Naive thymus-derived CD4-positive, alpha-beta T cell (primary cell): ENCODE measurements at regions of chr10 and their contacts with region 1.

Region 1: DNA sequence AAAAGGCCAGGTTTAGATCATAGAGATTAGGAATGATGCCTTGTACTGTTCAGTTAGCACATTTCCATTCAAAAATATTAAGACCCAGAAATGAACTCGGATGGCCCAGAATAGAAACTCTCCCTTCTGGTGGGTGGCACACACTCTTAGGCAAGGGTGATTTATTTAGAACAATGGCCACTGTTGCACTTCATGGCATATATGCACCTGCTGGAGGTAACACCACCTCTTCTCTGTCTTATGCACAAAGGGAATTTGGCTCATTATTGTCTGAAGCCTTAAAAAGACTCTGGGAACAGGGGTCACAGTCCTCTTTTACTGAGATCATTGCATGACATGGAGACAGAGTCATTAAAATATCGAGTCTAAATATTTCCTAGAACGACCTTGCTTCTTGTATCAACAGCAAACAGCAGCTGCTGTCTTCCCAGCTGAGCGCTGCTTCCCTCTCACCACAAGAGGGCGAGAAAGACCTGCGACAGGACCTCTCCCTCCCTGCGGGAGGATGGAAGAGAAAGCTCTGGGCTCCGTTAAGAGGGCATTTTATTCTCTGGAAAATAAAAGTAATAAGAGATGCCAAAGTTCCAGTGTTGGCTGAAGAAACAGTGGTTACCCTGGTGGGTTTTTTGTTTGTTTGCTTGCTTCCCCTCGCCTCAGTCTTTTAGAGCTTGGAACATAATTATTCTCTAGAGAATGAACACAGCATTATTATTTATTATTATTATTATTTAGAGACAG is 13.6 kb upstream of the BAMBI start:
- DNase-seq: peak; percentile 33 to 67 (median 58)
- ATAC-seq: peak; percentile 89
- H3K4me3 ChIP-seq: no peak overlapping the region
- H3K4me3 Mint-ChIP-seq: no peak overlapping the region
- H3K27ac ChIP-seq: no peak overlapping the region
- H3K27ac Mint-ChIP-seq: no peak overlapping the region
- H3K4me1 ChIP-seq: peaks cover 0 to 4% of the 10 kb centered on the region in 2 donors
- H3K4me1 Mint-ChIP-seq: peaks cover 5 to 11% (median 7%) of the 10 kb centered on the region in 7 donors
- H3K27me3 ChIP-seq: peaks cover 0 to 8% of the 10 kb centered on the region in 2 donors
- H3K27me3 Mint-ChIP-seq: peaks cover 45 to 50% (median 49%) of the 10 kb centered on the region in 5 donors

Region 2: GRCh38 chr10:28432210-28432676 is 231.5 kb before region 1 on chr10:
- CTCF ChIA-PET with region 1: no interaction called
- POLR2A ChIA-PET with region 1: no interaction called
- intact Hi-C with region 1: loop called in 1 of 2 experiments (anchors 5 kb)
- DNase-seq: peak in 7 of 9 donors; percentile 11 to 45 (median 35)
- ATAC-seq: peak; percentile 83
- H3K4me3 ChIP-seq: no peak overlapping the region
- H3K4me3 Mint-ChIP-seq: peak overlapping the region in 9 of 10 donors; percentile 17 to 80 (median 57)
- H3K27ac ChIP-seq: no peak overlapping the region
- H3K27ac Mint-ChIP-seq: no peak overlapping the region
- H3K4me1 ChIP-seq: no peaks in the 10 kb centered on the region
- H3K4me1 Mint-ChIP-seq: peaks cover 4 to 9% (median 7%) of the 10 kb centered on the region in 7 donors
- H3K27me3 ChIP-seq: no peaks in the 10 kb centered on the region
- H3K27me3 Mint-ChIP-seq: peaks cover 0 to 7% (median 0%) of the 10 kb centered on the region in 5 donors

Region 3: GRCh38 chr10:28991326-28992270 is 327.9 kb after region 1 on chr10:
- CTCF ChIA-PET with region 1: no interaction called
- POLR2A ChIA-PET with region 1: no interaction called
- intact Hi-C with region 1: loop called in 1 of 2 experiments (anchors 1 kb)
- DNase-seq: peak in 5 of 9 donors; percentile 0 to 25 (median 11)
- ATAC-seq: peak; percentile 40
- H3K4me3 ChIP-seq: no peak overlapping the region
- H3K4me3 Mint-ChIP-seq: no peak overlapping the region
- H3K27ac ChIP-seq: no peak overlapping the region
- H3K27ac Mint-ChIP-seq: no peak overlapping the region
- H3K4me1 ChIP-seq: no peaks in the 10 kb centered on the region
- H3K4me1 Mint-ChIP-seq: no peaks in the 10 kb centered on the region
- H3K27me3 ChIP-seq: no peaks in the 10 kb centered on the region
- H3K27me3 Mint-ChIP-seq: peaks cover 0 to 20% (median 9%) of the 10 kb centered on the region in 5 donors

Region 4: GRCh38 chr10:29392376-29393021 is 728.8 kb after region 1 on chr10:
- CTCF ChIA-PET with region 1: no interaction called
- POLR2A ChIA-PET with region 1: no interaction called
- intact Hi-C with region 1: loop called in 1 of 2 experiments (anchors 1 kb)
- DNase-seq: peak in 4 of 9 donors; percentile 8 to 24 (median 22)
- ATAC-seq: peak; percentile 61
- H3K4me3 ChIP-seq: no peak overlapping the region
- H3K4me3 Mint-ChIP-seq: no peak overlapping the region
- H3K27ac ChIP-seq: no peak overlapping the region
- H3K27ac Mint-ChIP-seq: no peak overlapping the region
- H3K4me1 ChIP-seq: no peaks in the 10 kb centered on the region
- H3K4me1 Mint-ChIP-seq: peaks cover 0 to 3% (median 0%) of the 10 kb centered on the region in 7 donors
- H3K27me3 ChIP-seq: no peaks in the 10 kb centered on the region
- H3K27me3 Mint-ChIP-seq: peaks cover 0 to 24% (median 9%) of the 10 kb centered on the region in 5 donors

Region 5: DNA sequence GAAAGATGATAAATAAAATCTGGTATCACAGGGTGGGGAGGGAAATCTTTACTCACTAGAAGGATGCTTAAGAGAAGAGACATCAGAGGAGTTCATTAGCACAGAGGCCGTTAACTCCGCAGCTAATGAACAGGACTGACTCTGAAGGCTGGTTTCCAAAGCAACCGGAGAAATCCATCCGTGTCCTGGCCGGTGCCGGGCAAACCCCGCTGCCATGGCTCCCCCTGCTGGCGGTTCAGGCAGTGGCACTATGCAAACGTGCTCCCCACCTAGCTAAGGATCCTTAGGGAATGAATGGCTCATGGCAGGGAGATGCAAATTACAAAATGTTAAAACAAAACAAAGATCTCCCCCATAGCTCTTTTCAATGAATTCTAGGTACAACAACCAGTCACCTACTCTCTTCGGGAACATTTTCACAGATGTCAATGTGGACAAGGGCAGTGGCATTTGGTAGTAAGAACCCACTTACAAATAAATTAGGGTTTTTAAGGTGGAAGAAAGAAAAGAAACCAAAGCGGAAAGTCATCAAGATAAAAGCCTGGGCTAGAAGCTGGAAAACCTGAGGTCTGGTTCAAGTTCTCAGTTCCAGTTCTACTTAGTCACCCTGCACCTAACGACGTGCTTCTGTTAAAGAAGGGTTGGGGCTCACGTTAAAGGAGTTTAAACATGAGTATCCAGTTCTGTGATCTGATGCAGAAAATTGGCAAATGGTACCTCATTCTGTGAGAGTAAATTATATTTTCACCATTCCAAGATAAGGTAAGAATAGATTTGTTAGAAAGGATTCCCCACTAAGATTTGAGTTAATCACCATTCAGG is 832.8 kb after region 1 on chr10:
- CTCF ChIA-PET with region 1: no interaction called
- POLR2A ChIA-PET with region 1: no interaction called
- intact Hi-C with region 1: loop called in 1 of 2 experiments (anchors 1 kb)
- DNase-seq: peak in 8 of 9 donors; percentile 12 to 77 (median 32)
- ATAC-seq: peak; percentile 83
- H3K4me3 ChIP-seq: no peak overlapping the region
- H3K4me3 Mint-ChIP-seq: no peak overlapping the region
- H3K27ac ChIP-seq: no peak overlapping the region
- H3K27ac Mint-ChIP-seq: no peak overlapping the region
- H3K4me1 ChIP-seq: no peaks in the 10 kb centered on the region
- H3K4me1 Mint-ChIP-seq: peaks cover 0 to 5% (median 0%) of the 10 kb centered on the region in 7 donors
- H3K27me3 ChIP-seq: no peaks in the 10 kb centered on the region
- H3K27me3 Mint-ChIP-seq: no peaks in the 10 kb centered on the region